ENCODE measurements at regions of chr19 and their contacts with region 1.

Region 1: DNA sequence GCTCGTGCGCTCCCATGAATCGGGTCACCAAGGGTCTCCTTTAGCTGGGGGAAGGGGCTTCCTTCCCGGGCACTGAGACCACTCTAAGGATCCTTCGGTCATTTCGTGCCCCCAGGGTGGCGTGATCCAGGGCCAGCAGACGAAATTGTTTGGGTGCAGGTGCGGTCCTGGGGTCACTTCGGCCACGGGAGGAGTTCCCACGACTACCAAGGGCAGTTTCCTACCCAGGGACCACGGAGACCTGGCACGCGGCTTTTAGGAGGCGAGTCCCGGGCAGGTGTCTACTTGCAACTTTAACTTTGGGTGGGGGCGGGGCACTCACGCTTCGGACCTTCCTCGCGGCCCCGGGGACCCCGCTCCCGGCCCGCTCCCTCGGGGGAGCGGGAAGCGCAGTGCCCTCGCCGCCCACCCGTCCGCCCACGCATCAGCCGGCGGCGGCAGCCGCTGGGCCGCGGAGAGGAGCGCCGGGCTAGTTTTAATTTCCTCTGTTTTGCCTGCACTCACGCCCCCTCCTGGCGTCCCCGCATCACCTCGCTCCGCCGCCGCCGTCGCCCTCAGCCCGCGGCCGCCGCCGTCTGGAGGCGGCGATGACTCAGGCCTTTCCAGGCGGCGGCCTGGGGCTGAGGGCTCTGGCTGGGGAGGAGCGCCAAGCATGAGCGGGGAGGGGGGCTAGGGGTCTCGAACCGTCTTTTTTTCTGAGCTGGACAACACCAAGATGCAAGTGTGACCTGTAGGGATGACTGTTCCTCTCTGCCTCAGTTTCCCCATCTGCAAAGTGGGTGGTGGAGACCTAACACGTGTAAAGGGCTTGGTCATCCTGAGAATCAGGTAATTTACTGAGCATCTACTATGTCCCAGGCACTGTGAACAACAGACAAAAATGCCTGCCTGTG is 21.8 kb downstream of the OLFM2 start:
- DNase-seq: peak; percentile 88
- H3K4me3 ChIP-seq: peak overlapping the region; percentile 38 to 56 (median 56)
- H3K27ac ChIP-seq: peak overlapping the region; percentile 8
- H3K4me1 ChIP-seq: peaks cover 7% of the 10 kb centered on the region
- H3K27me3 ChIP-seq: peaks cover 18 to 25% of the 10 kb centered on the region in 2 experiments
- CTCF ChIP-seq: peak; percentile 65 to 70
- POLR2A ChIP-seq: no peak

Region 2: GRCh38 chr19:9847087-9847671 is 67.4 kb before region 1 on chr19:
- CTCF ChIA-PET with region 1: no interaction called
- POLR2A ChIA-PET with region 1: no interaction called
- dilution Hi-C with region 1: no loop called
- intact Hi-C with region 1: loop called (anchors 1 kb)
- DNase-seq: peak; percentile 60
- H3K4me3 ChIP-seq: no peak overlapping the region
- H3K27ac ChIP-seq: no peak overlapping the region
- H3K4me1 ChIP-seq: no peaks in the 10 kb centered on the region
- H3K27me3 ChIP-seq: no peaks in the 10 kb centered on the region
- CTCF ChIP-seq: peak; percentile 67
- POLR2A ChIP-seq: no peak

Region 3: GRCh38 chr19:9966448-9967143 is 52.0 kb after region 1 on chr19:
- CTCF ChIA-PET with region 1: no interaction called
- POLR2A ChIA-PET with region 1: no interaction called
- dilution Hi-C with region 1: no loop called
- intact Hi-C with region 1: no loop called
- DNase-seq: no peak
- H3K4me3 ChIP-seq: no peak overlapping the region
- H3K27ac ChIP-seq: no peak overlapping the region
- H3K4me1 ChIP-seq: no peaks in the 10 kb centered on the region
- H3K27me3 ChIP-seq: peaks cover 6 to 8% of the 10 kb centered on the region in 2 experiments
- CTCF ChIP-seq: no peak
- POLR2A ChIP-seq: no peak